Activated CD4-positive, alpha-beta memory T cell treated with anti-CD3 and anti-CD28 coated beads, Interleukin-2, amount 10 ng/mL, durations not matched to agents 7 days and 5 days (primary cell): ENCODE measurements at regions of chr14 and their contacts with region 1.

Region 1: DNA sequence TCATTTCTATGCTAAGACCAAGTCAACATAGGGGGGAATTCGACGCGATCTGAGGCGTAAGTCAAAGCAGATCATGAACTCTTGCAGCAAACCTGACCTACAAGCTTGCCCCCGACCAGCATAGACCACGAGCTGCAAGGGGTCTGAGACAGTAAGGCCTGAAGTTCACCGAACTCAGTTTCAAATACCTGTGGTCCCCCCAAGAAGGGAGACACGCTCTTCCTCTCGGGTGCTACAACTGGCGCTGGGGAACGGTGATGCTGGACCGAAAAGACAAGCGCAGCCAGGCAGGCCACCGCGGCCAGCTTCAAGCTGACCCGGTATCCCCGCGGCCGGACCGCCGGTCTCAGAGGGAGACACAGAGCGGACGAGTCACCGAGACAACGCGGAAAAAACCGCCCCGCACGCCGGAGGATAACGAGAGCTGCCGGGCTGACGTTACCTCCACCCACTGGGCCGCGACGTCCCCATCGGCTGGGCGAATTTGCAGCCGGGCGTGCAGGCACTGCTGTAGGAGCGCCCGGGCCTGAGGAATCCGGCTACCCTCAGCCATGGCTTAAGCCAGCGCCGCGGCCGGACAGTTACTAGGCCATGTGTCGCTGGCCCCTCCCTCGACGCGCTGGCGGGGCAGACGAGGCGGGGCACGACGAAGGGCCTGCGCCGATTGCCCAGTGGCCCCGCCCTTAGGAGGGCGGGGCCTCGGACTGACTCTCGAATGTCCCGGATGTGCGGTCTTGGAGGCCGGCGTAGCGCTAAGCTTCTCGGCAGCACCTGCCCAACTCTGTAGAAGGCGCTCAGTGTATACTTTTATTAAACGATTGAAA is at the start of gene DTD2:
- DNase-seq: peak; percentile 93
- H3K4me3 Mint-ChIP-seq: peak within 1 kb of the TSS; percentile 97
- H3K27ac Mint-ChIP-seq: peak within 1 kb of the TSS; percentile 91
- H3K4me1 Mint-ChIP-seq: peaks cover 30% of the 10 kb centered on the region
- H3K27me3 Mint-ChIP-seq: peaks cover 1% of the 10 kb centered on the region
- total RNA-seq, gene DTD2: 12.8 to 13.0 TPM

Region 2: GRCh38 chr14:31026395-31027118 is 430.5 kb before region 1 on chr14:
- CTCF ChIA-PET with region 1: no interaction called
- POLR2A ChIA-PET with region 1: interaction called, 12 read pairs
- DNase-seq: peak; percentile 94
- H3K4me3 Mint-ChIP-seq: peak overlapping the region; percentile 94
- H3K27ac Mint-ChIP-seq: peak overlapping the region; percentile 91
- H3K4me1 Mint-ChIP-seq: peaks cover 53% of the 10 kb centered on the region
- H3K27me3 Mint-ChIP-seq: no peaks in the 10 kb centered on the region

Region 3: GRCh38 chr14:31377433-31377832 is 79.6 kb before region 1 on chr14:
- CTCF ChIA-PET with region 1: no interaction called
- POLR2A ChIA-PET with region 1: interaction called, 10 read pairs
- DNase-seq: no peak
- H3K4me3 Mint-ChIP-seq: no peak overlapping the region
- H3K27ac Mint-ChIP-seq: no peak overlapping the region
- H3K4me1 Mint-ChIP-seq: peaks cover 9% of the 10 kb centered on the region
- H3K27me3 Mint-ChIP-seq: no peaks in the 10 kb centered on the region

Region 4: GRCh38 chr14:31420319-31421111 is 36.5 kb before region 1 on chr14 and contains the start of gene HEATR5A:
- CTCF ChIA-PET with region 1: interaction called, 17 read pairs
- POLR2A ChIA-PET with region 1: interaction called, 33 read pairs
- DNase-seq: peak; percentile 93
- H3K4me3 Mint-ChIP-seq: peak within 1 kb of the TSS; percentile 99
- H3K27ac Mint-ChIP-seq: peak within 1 kb of the TSS; percentile 77
- H3K4me1 Mint-ChIP-seq: peaks cover 19% of the 10 kb centered on the region
- H3K27me3 Mint-ChIP-seq: peaks cover 3% of the 10 kb centered on the region
- total RNA-seq, gene HEATR5A: 9.4 to 12.5 TPM

Region 5: DNA sequence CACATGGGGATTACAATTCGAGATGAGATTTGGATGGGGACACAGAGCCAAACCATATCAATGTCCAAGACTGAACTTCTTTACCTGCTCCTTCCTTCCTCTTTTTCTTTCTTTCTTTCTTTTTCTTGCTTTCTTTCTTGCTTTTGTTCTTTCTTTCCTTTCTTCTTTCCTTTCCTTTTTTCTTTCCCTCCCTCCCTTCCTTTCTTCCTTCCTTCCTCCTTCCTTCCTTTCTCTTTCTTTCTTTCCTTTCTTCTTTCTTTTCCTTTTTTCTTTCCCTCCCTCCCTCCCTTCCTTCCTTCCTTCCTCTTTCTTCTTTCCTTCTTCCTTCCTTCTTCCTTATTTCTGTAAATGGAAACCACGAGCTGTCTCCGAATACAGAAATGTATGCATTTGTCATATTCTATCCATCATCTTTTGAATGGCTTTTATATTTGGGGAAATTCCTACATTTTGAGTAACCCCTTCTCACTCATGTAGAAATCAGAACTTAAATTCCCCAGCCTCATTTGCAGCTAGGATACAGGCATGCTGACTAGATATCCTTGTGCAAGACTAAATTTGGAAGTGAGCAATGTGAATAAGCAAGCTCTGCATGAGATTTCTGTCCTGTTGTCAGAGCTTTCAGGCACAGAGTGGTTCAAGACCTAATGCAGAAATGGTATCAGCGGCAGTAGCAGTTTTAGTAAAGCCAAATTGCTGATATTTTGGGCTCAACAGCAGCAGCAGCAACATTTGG is 19.2 kb after region 1 on chr14:
- CTCF ChIA-PET with region 1: no interaction called
- POLR2A ChIA-PET with region 1: no interaction called
- DNase-seq: no peak
- H3K4me3 Mint-ChIP-seq: no peak overlapping the region
- H3K27ac Mint-ChIP-seq: no peak overlapping the region
- H3K4me1 Mint-ChIP-seq: no peaks in the 10 kb centered on the region
- H3K27me3 Mint-ChIP-seq: peaks cover 8% of the 10 kb centered on the region